ENCODE measurements at regions of chr22 and their contacts with region 1.

Region 1: DNA sequence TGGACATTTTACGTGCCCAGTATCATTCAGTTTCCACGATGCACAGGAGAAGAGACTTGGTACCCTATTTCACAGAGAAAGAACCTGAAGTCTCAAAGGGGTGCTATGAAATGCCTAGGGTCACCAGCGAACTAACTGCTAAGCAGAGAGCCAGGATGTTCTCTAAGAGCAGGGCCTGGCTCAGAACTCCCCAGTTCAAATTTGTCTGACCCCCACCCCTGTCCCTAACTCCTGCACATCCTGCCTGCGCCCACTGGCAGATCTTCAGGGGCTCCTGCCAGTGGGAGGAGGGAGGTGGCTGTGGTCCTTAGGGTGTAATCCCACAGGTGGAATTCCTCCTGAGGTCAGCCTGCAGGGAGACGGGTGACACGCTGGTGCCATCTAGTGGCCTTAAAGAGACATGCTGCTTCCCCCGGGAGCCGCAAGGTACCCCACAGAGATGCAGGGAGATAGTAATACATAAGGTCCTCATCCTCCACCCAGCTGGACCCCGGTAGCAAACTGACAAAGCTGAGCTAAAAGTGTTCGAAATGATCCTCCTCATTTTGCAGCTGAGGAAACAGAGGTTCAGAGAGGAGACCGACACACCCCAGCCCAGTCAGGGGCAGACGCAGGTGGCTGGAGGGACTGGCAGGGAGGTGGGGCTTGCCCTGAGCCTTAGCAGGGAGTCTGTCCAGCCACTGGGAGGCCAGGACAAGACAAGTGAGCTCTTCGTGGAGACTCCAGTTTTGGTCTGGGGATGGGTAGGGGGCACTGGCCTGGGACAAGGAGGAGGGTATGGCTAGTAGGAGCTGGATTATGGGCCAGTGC is 34.1 kb downstream of the MB start:
- DNase-seq: peak; percentile 58
- H3K4me3 ChIP-seq: no peak overlapping the region
- H3K27ac ChIP-seq: no peak overlapping the region
- H3K4me1 ChIP-seq: peaks cover 7% of the 10 kb centered on the region
- H3K27me3 ChIP-seq: no peaks in the 10 kb centered on the region
- CTCF ChIP-seq: peak; percentile 85 to 94 (median 94)
- POLR2A ChIP-seq: no peak

Region 2: GRCh38 chr22:35350539-35351503 is 232.2 kb before region 1 on chr22:
- intact Hi-C with region 1: loop called (anchors 5 kb)
- DNase-seq: peak; percentile 91
- H3K4me3 ChIP-seq: peak overlapping the region; percentile 30 to 40
- H3K27ac ChIP-seq: peak overlapping the region; percentile 53 to 59
- H3K4me1 ChIP-seq: peaks cover 4% of the 10 kb centered on the region
- H3K27me3 ChIP-seq: no peaks in the 10 kb centered on the region
- CTCF ChIP-seq: peak; percentile 51 to 99 (median 92)
- POLR2A ChIP-seq: peak; percentile 66

Region 3: DNA sequence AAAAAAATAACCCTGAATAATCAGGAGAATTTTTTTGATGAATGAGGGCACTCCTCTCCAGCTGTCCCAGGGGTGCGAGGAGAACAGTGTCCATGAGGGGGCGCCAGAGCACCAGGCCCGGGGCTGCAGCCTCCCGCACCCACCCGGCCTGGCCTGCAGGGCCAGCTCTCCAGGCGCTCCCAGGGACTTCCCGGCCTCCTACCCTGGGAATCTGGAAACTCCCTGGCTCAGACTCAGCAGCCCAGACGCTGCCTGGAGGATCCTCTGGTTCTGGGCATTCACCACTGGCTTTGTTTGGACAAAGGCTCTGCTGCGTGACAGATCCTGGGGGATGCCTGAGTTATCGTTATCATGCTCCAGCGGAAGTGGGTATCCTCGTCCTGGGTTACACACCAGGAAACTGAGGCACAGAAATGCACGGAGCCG is 152.2 kb before region 1 on chr22:
- intact Hi-C with region 1: loop called (anchors 1 kb)
- DNase-seq: peak; percentile 88
- H3K4me3 ChIP-seq: no peak overlapping the region
- H3K27ac ChIP-seq: peak overlapping the region; percentile 1 to 3
- H3K4me1 ChIP-seq: no peaks in the 10 kb centered on the region
- H3K27me3 ChIP-seq: no peaks in the 10 kb centered on the region
- CTCF ChIP-seq: peak; percentile 99 to 100 (median 99)
- POLR2A ChIP-seq: no peak